Activated CD4-positive, alpha-beta T cell treated with anti-CD3 and anti-CD28 coated beads for 36 hours (primary cell): ENCODE measurements at regions of chr4 and their contacts with region 1.

Region 1: GRCh38 chr4:33989820-33990443 is 2254.4 kb downstream of the ARAP2 start:
- DNase-seq: no peak
- ATAC-seq: no peak
- H3K4me3 Mint-ChIP-seq: no peak overlapping the region
- H3K27ac Mint-ChIP-seq: no peak overlapping the region
- H3K4me1 Mint-ChIP-seq: no peaks in the 10 kb centered on the region
- H3K27me3 Mint-ChIP-seq: no peaks in the 10 kb centered on the region

Region 2: DNA sequence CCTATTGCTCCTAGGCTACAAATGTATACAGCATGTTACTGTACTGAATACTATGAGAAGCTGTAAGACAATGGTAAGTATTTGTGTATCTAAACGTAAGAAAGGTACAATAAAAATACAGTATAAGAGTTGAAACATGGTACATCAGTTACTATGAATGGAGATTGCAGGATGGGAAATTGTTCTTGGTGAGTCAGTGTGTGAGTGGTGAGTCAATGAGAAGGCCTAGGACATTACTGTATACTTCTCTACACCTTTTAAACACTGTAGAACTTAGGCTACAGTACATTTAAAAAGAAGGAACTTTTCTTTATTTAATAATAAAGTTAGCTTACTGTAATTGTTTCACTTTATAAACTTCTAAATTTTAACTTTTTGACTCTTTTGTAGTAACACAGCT is 666.5 kb before region 1 on chr4:
- CTCF ChIA-PET with region 1: no interaction called
- POLR2A ChIA-PET with region 1: no interaction called
- intact Hi-C with region 1: no loop called
- DNase-seq: no peak
- ATAC-seq: no peak
- H3K4me3 Mint-ChIP-seq: no peak overlapping the region
- H3K27ac Mint-ChIP-seq: no peak overlapping the region
- H3K4me1 Mint-ChIP-seq: no peaks in the 10 kb centered on the region
- H3K27me3 Mint-ChIP-seq: no peaks in the 10 kb centered on the region

Region 3: DNA sequence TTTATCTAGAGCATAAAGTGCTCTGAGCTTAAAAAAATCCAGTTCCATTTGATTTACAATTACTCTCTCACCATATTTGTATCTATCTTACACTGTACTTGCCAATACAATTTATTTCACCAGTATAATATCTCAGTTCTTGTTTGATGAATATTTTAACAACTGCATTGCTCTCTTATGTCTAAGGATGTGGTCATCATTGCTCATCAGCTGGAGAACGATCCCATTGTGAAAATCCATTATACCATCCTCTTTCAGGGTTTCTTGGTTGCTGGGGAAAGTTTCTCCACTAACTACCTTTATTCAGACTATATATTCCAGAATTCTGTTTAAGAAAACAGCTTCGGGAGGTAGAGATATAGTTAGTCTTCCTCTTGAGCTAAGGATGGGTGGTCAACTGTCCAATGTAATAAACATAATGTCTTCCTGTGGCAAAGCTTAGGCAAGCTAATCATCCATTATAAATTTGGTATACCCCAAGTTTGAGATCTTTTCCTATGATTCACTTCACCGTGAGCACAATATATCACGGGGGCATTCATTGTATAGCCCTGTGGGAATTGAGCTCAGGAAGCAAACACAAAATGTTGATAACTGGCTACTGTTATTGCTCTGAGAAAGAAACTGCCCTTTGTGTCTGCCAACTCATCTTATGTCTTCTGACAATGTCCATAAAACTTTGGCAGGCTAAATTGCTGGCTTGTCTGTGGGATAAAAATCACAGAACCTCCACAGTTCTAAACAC is 107.5 kb before region 1 on chr4:
- CTCF ChIA-PET with region 1: no interaction called
- POLR2A ChIA-PET with region 1: no interaction called
- intact Hi-C with region 1: no loop called
- DNase-seq: no peak
- ATAC-seq: no peak
- H3K4me3 Mint-ChIP-seq: no peak overlapping the region
- H3K27ac Mint-ChIP-seq: no peak overlapping the region
- H3K4me1 Mint-ChIP-seq: no peaks in the 10 kb centered on the region
- H3K27me3 Mint-ChIP-seq: no peaks in the 10 kb centered on the region

Region 4: DNA sequence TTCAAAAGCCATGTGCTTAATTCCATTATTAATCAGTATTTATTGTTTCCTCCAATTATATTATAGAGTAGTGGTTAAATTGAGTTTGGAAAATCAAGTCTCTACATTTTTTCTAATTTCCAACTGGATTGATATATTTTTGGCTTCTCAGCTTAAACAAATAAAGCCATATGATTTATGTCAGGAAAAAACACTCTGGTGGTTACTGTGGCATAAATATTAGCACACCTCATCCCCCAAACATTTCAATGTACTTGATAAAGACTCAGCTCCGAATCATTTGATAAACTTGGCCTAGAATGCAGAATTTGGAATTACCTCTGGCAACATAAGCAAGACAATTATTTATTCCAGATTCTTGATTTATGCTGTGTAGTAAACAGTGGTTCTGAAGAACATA is 59.4 kb before region 1 on chr4:
- CTCF ChIA-PET with region 1: no interaction called
- POLR2A ChIA-PET with region 1: no interaction called
- intact Hi-C with region 1: loop called in 1 of 2 experiments (anchors 5 kb)
- DNase-seq: no peak
- ATAC-seq: no peak
- H3K4me3 Mint-ChIP-seq: no peak overlapping the region
- H3K27ac Mint-ChIP-seq: no peak overlapping the region
- H3K4me1 Mint-ChIP-seq: no peaks in the 10 kb centered on the region
- H3K27me3 Mint-ChIP-seq: no peaks in the 10 kb centered on the region